Caco-2 (cell line): ENCODE measurements at regions of chr12 and their contacts with region 1.

Region 1: GRCh38 chr12:89632778-89633177 is 75.9 kb downstream of the ATP2B1 start:
- DNase-seq: peak in 1 of 2 experiments; percentile 49
- H3K4me3 ChIP-seq: no peak overlapping the region
- H3K4me3 Mint-ChIP-seq: no peak overlapping the region
- H3K27ac Mint-ChIP-seq: no peak overlapping the region
- H3K4me1 ChIP-seq: peaks cover 33% of the 10 kb centered on the region
- H3K4me1 Mint-ChIP-seq: peaks cover 32% of the 10 kb centered on the region
- H3K27me3 ChIP-seq: no peaks in the 10 kb centered on the region
- H3K27me3 Mint-ChIP-seq: no peaks in the 10 kb centered on the region
- CTCF ChIP-seq: no peak

Region 2: GRCh38 chr12:89648211-89648930 is 15.6 kb after region 1 on chr12:
- CTCF ChIA-PET with region 1: interaction called, 4 read pairs
- POLR2A ChIA-PET with region 1: interaction called, 3 read pairs
- intact Hi-C with region 1: loop called (anchors 1 kb)
- DNase-seq: peak; percentile 79 to 87
- H3K4me3 ChIP-seq: no peak overlapping the region
- H3K4me3 Mint-ChIP-seq: peak overlapping the region; percentile 16
- H3K27ac Mint-ChIP-seq: peak overlapping the region; percentile 48
- H3K4me1 ChIP-seq: peaks cover 63% of the 10 kb centered on the region
- H3K4me1 Mint-ChIP-seq: peaks cover 52% of the 10 kb centered on the region
- H3K27me3 ChIP-seq: no peaks in the 10 kb centered on the region
- H3K27me3 Mint-ChIP-seq: no peaks in the 10 kb centered on the region
- CTCF ChIP-seq: no peak

Region 3: GRCh38 chr12:89949457-89950195 is 316.8 kb after region 1 on chr12:
- CTCF ChIA-PET with region 1: no interaction called
- POLR2A ChIA-PET with region 1: no interaction called
- intact Hi-C with region 1: loop called (anchors 2 kb)
- DNase-seq: no peak
- H3K4me3 ChIP-seq: no peak overlapping the region
- H3K4me3 Mint-ChIP-seq: no peak overlapping the region
- H3K27ac Mint-ChIP-seq: no peak overlapping the region
- H3K4me1 ChIP-seq: peaks cover 50% of the 10 kb centered on the region
- H3K4me1 Mint-ChIP-seq: peaks cover 30% of the 10 kb centered on the region
- H3K27me3 ChIP-seq: no peaks in the 10 kb centered on the region
- H3K27me3 Mint-ChIP-seq: no peaks in the 10 kb centered on the region
- CTCF ChIP-seq: no peak